Activated CD8-positive, alpha-beta T cell treated with anti-CD3 and anti-CD28 coated beads, Interleukin-2, amount 10 ng/mL, durations not matched to agents 7 days and 5 days (primary cell): ENCODE measurements at regions of chr3 and their contacts with region 1.

Region 1: DNA sequence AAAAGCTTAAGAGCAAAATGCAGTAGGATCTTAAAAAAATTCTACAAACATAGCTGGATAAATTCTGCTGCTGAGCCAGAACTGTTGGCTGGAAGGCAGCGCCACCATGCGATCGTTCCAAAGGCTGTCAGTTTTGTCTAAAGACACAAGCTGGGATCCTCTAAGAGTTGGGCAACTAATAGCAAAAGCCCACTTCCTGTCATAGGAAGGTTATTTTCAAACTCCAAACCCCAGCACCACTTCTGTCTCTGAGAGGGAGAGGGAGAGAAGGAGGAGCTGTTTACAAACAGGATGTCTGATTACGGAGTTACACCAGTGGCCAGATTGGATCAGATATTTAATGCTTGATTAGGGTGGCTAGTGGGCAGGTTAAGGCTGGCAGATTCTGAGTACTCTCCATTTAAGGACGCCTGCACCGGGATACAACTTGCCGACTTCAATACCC is 44.0 kb downstream of the EIF4E3 start:
- DNase-seq: peak; percentile 52
- ATAC-seq: peak; percentile 67
- H3K4me3 Mint-ChIP-seq: no peak overlapping the region
- H3K27ac Mint-ChIP-seq: peak overlapping the region; percentile 30
- H3K4me1 Mint-ChIP-seq: peaks cover 17% of the 10 kb centered on the region
- H3K27me3 Mint-ChIP-seq: no peaks in the 10 kb centered on the region

Region 2: DNA sequence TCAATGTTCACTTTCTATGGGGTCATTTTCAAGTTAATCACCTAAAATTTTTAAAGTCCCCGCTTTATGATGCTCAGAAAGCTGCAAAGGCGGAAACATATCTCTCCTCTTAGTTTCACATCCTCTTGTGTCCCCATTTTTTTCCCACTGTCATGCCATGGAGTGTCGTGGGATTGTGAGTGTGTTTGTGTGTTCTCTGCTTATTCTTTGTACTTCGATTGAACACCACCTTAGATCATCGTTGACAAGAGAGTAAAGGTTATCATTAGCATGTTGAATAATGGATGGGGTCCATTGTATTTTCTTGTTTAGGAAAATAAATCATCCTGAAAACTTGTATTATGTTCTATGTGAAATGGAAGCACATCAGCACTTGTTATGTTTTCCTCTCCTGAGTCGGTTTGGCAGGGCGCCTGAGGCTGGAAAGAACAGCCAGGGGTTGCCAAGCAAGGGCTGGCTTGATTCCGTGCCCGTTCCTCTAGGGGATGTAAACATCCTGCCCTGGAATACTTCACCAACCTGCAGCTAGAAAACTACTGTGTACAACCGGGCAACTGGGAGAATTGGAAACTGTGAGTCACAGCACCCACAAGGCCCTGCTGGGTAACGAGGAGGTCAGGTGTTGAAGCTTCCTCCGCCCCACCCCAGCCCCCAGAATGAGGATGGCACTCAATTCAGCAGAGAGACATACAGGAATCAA is 23.3 kb before region 1 on chr3:
- CTCF ChIA-PET with region 1: interaction called, 10 read pairs
- POLR2A ChIA-PET with region 1: no interaction called
- DNase-seq: no peak
- ATAC-seq: no peak
- H3K4me3 Mint-ChIP-seq: no peak overlapping the region
- H3K27ac Mint-ChIP-seq: no peak overlapping the region
- H3K4me1 Mint-ChIP-seq: peaks cover 20% of the 10 kb centered on the region
- H3K27me3 Mint-ChIP-seq: no peaks in the 10 kb centered on the region

Region 3: GRCh38 chr3:71694358-71694999 is 13.2 kb after region 1 on chr3:
- CTCF ChIA-PET with region 1: interaction called, 19 read pairs
- POLR2A ChIA-PET with region 1: no interaction called
- DNase-seq: no peak
- ATAC-seq: no peak
- H3K4me3 Mint-ChIP-seq: no peak overlapping the region
- H3K27ac Mint-ChIP-seq: no peak overlapping the region
- H3K4me1 Mint-ChIP-seq: peaks cover 3% of the 10 kb centered on the region
- H3K27me3 Mint-ChIP-seq: no peaks in the 10 kb centered on the region

Region 4: DNA sequence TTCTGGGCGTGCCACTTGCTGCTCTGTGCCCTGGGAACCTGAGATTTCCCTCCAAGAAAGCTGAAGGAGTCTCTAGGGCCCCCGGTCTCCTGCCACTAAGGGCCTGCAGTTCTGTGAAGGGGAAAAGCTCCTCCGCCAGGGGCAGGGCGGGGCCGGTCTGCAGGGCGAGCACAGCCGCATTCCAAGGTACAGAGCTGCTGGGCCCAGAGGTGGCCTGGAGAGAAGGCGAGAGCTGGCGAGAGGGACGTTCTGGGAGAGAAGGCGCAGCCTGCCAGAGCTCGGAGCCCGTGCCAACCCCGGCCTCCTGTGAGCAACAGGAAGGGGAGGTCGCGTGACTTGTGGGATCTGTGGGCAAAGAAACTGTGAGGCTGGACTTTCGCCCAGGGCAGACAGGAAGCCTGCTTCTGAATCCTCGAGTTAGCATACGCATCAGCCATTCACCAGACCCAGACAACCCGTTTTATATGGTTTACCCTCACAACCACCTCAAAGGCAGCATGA is 666.6 kb after region 1 on chr3:
- CTCF ChIA-PET with region 1: no interaction called
- POLR2A ChIA-PET with region 1: no interaction called
- DNase-seq: no peak
- ATAC-seq: no peak
- H3K4me3 Mint-ChIP-seq: no peak overlapping the region
- H3K27ac Mint-ChIP-seq: no peak overlapping the region
- H3K4me1 Mint-ChIP-seq: peaks cover 53% of the 10 kb centered on the region
- H3K27me3 Mint-ChIP-seq: no peaks in the 10 kb centered on the region